ENCODE measurements at regions of chr1 and their contacts with region 1.

Region 1: GRCh38 chr1:192639607-192640368 is 3.8 kb downstream of the RGS13 start:
- DNase-seq: no peak
- H3K4me3 Mint-ChIP-seq: no peak overlapping the region
- H3K27ac Mint-ChIP-seq: peak overlapping the region; percentile 39
- H3K4me1 Mint-ChIP-seq: peaks cover 11% of the 10 kb centered on the region
- H3K27me3 Mint-ChIP-seq: peaks cover 7% of the 10 kb centered on the region

Region 2: GRCh38 chr1:192575499-192576189 is 64.1 kb before region 1 on chr1 and contains the start of gene RGS1:
- intact Hi-C with region 1: no loop called
- DNase-seq: peak; percentile 61
- H3K4me3 Mint-ChIP-seq: peak within 1 kb of the TSS; percentile 78
- H3K27ac Mint-ChIP-seq: peak within 1 kb of the TSS; percentile 85
- H3K4me1 Mint-ChIP-seq: peaks cover 80% of the 10 kb centered on the region
- H3K27me3 Mint-ChIP-seq: no peaks in the 10 kb centered on the region
- total RNA-seq, gene RGS1: 4.2 and 4.3 TPM in 2 replicates

Region 3: GRCh38 chr1:192700834-192701271 is 61.1 kb after region 1 on chr1:
- intact Hi-C with region 1: loop called (anchors 2 kb)
- DNase-seq: no peak
- H3K4me3 Mint-ChIP-seq: no peak overlapping the region
- H3K27ac Mint-ChIP-seq: no peak overlapping the region
- H3K4me1 Mint-ChIP-seq: peaks cover 17% of the 10 kb centered on the region
- H3K27me3 Mint-ChIP-seq: peaks cover 3% of the 10 kb centered on the region